Heart left ventricle (tissue), 16 donors: ENCODE measurements at regions of chr17 and their contacts with region 1.

Region 1: GRCh38 chr17:80614332-80615047 is 69.9 kb downstream of the RPTOR start:
- DNase-seq: no peak
- ATAC-seq: no peak
- H3K4me3 ChIP-seq: no peak overlapping the region
- H3K27ac ChIP-seq: no peak overlapping the region
- H3K4me1 ChIP-seq: peaks cover 0 to 22% (median 2%) of the 10 kb centered on the region in 12 donors
- H3K27me3 ChIP-seq: no peaks in the 10 kb centered on the region
- CTCF ChIP-seq: no peak
- POLR2A ChIP-seq: no peak

Region 2: DNA sequence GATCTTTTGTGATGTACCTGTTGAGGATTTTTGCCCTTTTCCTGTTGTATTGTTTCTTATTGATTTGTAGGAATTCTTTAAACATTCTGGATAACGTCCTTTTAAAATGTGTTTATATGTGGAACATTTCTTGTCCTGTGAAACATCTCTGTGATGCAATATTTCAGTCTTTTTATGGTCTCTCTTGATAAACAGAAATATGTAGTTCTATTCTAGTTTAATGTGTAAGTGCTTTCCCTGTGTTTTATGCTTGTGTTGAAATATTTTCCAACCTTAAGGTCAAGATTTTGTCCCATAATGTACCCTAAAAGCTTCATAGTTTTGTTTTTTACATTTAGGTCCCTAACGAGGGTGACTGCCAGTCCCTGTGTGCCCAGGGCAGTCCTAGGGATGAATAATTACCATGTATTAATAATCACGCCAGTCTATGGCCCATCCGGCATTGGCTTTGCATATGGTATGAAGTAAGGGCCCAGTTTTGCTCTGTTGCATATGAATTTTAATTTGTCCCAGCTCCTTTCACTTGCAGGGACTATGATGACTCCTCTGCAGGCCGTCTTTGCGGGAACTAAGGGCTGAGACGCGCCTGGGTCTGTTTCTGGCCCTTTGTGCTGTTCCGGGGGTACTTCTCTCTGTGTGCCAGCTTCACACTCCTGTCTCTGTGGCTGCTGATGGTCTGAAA is 25.6 kb before region 1 on chr17:
- intact Hi-C with region 1: loop called in 1 of 10 experiments (anchors 2 kb)
- DNase-seq: no peak
- ATAC-seq: no peak
- H3K4me3 ChIP-seq: no peak overlapping the region
- H3K27ac ChIP-seq: no peak overlapping the region
- H3K4me1 ChIP-seq: no peaks in the 10 kb centered on the region
- H3K27me3 ChIP-seq: no peaks in the 10 kb centered on the region
- CTCF ChIP-seq: no peak
- POLR2A ChIP-seq: no peak